ENCODE measurements at regions of chr19 and their contacts with region 1.

Region 1: GRCh38 chr19:15449620-15450527 is at the start of gene WIZ:
- DNase-seq: peak; percentile 95
- H3K4me3 ChIP-seq: peak within 1 kb of the TSS; percentile 76 to 96 (median 80)
- H3K27ac ChIP-seq: peak within 1 kb of the TSS; percentile 81 to 89 (median 87)
- H3K4me1 ChIP-seq: peaks cover 0 to 37% (median 25%) of the 10 kb centered on the region in 4 donors
- H3K27me3 ChIP-seq: peaks cover 0 to 13% (median 6%) of the 10 kb centered on the region in 3 donors
- CTCF ChIP-seq: no peak
- EP300 ChIP-seq: no peak
- POLR2A ChIP-seq: no peak
- total RNA-seq, gene WIZ: 16.3 to 49.6 (median 28.4) TPM

Region 2: GRCh38 chr19:15332311-15332996 is 117.4 kb before region 1 on chr19 and contains the start of gene BRD4:
- intact Hi-C with region 1: loop called (anchors 5 kb)
- DNase-seq: peak; percentile 85
- H3K4me3 ChIP-seq: peak within 1 kb of the TSS; percentile 86 to 94 (median 88)
- H3K27ac ChIP-seq: peak within 1 kb of the TSS; percentile 91 to 97 (median 96)
- H3K4me1 ChIP-seq: peaks cover 0 to 47% (median 44%) of the 10 kb centered on the region in 4 donors
- H3K27me3 ChIP-seq: no peaks in the 10 kb centered on the region
- CTCF ChIP-seq: no peak
- EP300 ChIP-seq: no peak
- POLR2A ChIP-seq: no peak
- total RNA-seq, gene BRD4: 15.0 to 43.8 (median 21.4) TPM

Region 3: GRCh38 chr19:15404097-15404779 is 45.6 kb before region 1 on chr19:
- intact Hi-C with region 1: no loop called
- DNase-seq: peak; percentile 84
- H3K4me3 ChIP-seq: peak overlapping the region in 3 of 4 donors; percentile 8 to 31 (median 20)
- H3K27ac ChIP-seq: peak overlapping the region; percentile 64 to 92 (median 87)
- H3K4me1 ChIP-seq: peaks cover 0 to 86% (median 82%) of the 10 kb centered on the region in 4 donors
- H3K27me3 ChIP-seq: no peaks in the 10 kb centered on the region
- CTCF ChIP-seq: no peak
- EP300 ChIP-seq: peak in 1 of 4 donors; percentile 22
- POLR2A ChIP-seq: no peak

Region 4: GRCh38 chr19:15418588-15419412 is 31.1 kb before region 1 on chr19 and contains the start of gene AKAP8L:
- intact Hi-C with region 1: loop called (anchors 2 kb)
- DNase-seq: peak; percentile 100
- H3K4me3 ChIP-seq: peak within 1 kb of the TSS; percentile 73 to 81 (median 78)
- H3K27ac ChIP-seq: peak within 1 kb of the TSS; percentile 85 to 94 (median 90)
- H3K4me1 ChIP-seq: peaks cover 0 to 48% (median 42%) of the 10 kb centered on the region in 4 donors
- H3K27me3 ChIP-seq: no peaks in the 10 kb centered on the region
- CTCF ChIP-seq: peak; percentile 43 to 50 (median 46)
- EP300 ChIP-seq: no peak
- POLR2A ChIP-seq: peak; percentile 94 to 95
- total RNA-seq, gene AKAP8L: 90.5 to 145 (median 101) TPM

Region 5: GRCh38 chr19:15555759-15556633 is 106.1 kb after region 1 on chr19:
- intact Hi-C with region 1: loop called (anchors 5 kb)
- DNase-seq: peak; percentile 93
- H3K4me3 ChIP-seq: peak overlapping the region in 2 of 4 donors; percentile 31 to 40
- H3K27ac ChIP-seq: peak overlapping the region in 3 of 4 donors; percentile 35 to 69 (median 41)
- H3K4me1 ChIP-seq: peaks cover 0 to 20% (median 18%) of the 10 kb centered on the region in 4 donors
- H3K27me3 ChIP-seq: peaks cover 4 to 37% (median 16%) of the 10 kb centered on the region in 3 donors
- CTCF ChIP-seq: peak; percentile 73 to 84 (median 80)
- EP300 ChIP-seq: no peak
- POLR2A ChIP-seq: no peak

Region 6: DNA sequence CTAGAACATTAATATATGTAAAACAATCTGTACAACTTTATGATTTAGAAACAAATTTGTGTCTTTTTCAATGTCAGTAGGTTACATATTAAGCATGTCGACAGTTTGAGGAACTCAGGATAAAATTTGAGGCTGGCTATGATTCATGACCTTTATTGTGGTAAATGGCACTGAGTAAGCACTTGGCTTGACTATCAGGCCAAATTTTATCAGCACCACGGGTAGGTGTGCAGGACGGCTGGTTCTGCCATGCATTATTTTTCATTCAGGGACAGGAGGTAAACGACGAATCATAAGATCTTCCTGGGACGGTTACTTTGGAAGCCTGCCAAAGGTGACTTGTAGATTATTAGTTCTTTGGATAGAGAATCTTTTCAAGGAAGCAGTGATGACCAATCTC is 145.2 kb after region 1 on chr19:
- intact Hi-C with region 1: no loop called
- DNase-seq: no peak
- H3K4me3 ChIP-seq: no peak overlapping the region
- H3K27ac ChIP-seq: no peak overlapping the region
- H3K4me1 ChIP-seq: no peaks in the 10 kb centered on the region
- H3K27me3 ChIP-seq: peaks cover 0 to 7% (median 0%) of the 10 kb centered on the region in 3 donors
- CTCF ChIP-seq: no peak
- EP300 ChIP-seq: no peak
- POLR2A ChIP-seq: no peak

Measured in sigmoid colon (tissue), 7 donors.